GM12878 (cell line): ENCODE measurements at regions of chr20 and their contacts with region 1.

Region 1: DNA sequence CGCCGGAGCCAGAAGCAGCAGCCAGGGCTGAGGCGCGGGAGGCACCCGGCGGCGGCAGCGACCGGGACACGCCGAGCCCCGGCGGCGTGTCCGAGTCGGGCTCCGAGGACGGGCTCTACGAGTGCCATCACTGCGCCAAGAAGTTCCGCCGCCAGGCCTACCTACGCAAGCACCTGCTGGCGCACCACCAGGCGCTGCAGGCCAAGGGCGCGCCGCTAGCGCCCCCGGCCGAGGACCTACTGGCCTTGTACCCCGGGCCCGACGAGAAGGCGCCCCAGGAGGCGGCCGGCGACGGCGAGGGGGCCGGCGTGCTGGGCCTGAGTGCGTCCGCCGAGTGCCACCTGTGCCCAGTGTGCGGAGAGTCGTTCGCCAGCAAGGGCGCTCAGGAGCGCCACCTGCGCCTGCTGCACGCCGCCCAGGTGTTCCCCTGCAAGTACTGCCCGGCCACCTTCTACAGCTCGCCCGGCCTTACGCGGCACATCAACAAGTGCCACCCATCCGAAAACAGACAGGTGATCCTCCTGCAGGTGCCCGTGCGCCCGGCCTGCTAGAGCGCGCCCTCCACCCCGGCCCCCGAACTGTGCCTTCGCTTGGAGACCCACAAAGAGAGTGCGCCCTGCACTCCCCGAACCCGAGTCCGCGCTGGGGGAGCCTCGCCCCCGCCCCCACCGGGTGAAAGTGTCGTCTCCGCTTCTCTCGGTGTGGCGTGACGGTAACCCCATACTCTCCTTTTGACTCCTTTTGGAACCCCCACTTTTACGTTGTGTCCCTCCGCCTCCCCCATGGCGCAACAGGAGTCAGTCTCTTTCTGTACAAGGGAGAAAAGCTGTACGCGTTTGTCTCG is 1.6 kb downstream of the INSM1 start:
- DNase-seq: no peak
- ATAC-seq: peak; percentile 49
- H3K4me3 ChIP-seq: no peak overlapping the region
- H3K27ac ChIP-seq: no peak overlapping the region
- H3K4me1 ChIP-seq: no peaks in the 10 kb centered on the region
- H3K27me3 ChIP-seq: peaks cover 15 to 27% of the 10 kb centered on the region in 2 experiments
- CTCF ChIP-seq: no peak
- EP300 ChIP-seq: no peak
- POLR2A ChIP-seq: no peak
- RAD21 ChIP-seq: no peak

Region 2: GRCh38 chr20:20425823-20426654 is 56.6 kb after region 1 on chr20:
- CTCF ChIA-PET with region 1: no interaction called
- POLR2A ChIA-PET with region 1: no interaction called
- RAD21 ChIA-PET with region 1: no interaction called
- SMC1A ChIA-PET with region 1: no interaction called
- in situ Hi-C with region 1: no loop called
- intact Hi-C with region 1: loop called (anchors 5 kb)
- DNase-seq: no peak
- ATAC-seq: peak; percentile 79
- H3K4me3 ChIP-seq: no peak overlapping the region
- H3K27ac ChIP-seq: 0 out of 2 replicates have a peak overlapping the region, but pooled peaks have one; percentile 20
- H3K4me1 ChIP-seq: peaks cover 4% of the 10 kb centered on the region; the same call in 1 of the 2 replicates
- H3K27me3 ChIP-seq: no peaks in the 10 kb centered on the region
- CTCF ChIP-seq: no peak
- EP300 ChIP-seq: no peak
- POLR2A ChIP-seq: no peak
- RAD21 ChIP-seq: no peak